ENCODE measurements at regions of chr10 and their contacts with region 1.

Region 1: DNA sequence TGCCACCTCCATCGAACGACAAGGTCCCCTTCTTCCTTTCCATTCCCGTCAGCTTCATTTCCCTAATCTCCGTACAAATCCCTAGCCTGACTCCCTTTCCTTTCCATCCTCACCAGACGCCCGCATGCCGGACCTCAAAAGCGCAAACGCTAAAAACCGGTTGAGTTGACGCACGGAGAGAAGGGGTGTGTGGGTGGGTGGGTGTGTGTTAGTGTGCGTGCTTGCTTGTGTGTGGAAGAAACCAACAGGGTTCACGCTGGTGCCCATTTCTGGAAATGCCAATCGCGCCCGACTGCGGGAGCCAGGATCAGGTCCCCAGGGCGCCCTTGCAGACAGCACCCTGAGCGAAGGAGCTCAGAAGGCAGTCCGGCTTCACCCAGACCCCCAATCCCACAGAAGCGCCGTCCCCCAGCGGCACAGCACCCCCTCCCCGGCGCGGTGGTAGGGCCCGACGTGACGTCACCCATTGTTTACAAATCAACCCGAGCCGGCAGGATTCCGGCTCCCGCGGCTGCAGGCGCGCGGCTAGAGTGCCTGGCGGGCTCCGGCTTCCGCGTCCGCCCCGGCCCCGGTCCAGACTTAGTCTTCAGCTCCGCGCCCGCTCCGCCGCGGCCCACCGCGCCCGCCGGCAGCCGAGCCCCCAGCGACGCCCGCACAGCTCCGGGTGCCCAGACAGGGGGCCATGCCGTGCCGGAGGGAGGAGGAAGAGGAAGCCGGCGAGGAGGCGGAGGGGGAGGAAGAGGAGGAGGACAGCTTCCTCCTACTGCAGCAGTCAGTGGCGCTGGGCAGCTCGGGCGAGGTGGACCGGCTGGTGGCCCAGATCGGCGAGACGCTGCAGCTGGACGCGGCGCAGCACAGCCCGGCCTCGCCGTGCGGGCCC is at the start of gene FRAT1:
- DNase-seq: peak; percentile 91 to 94 (median 92)
- H3K4me3 ChIP-seq: peak within 1 kb of the TSS; percentile 68 to 91 (median 78)
- H3K27ac ChIP-seq: peak within 1 kb of the TSS; percentile 99 to 100
- H3K4me1 ChIP-seq: peaks cover 15 to 36% (median 30%) of the 10 kb centered on the region in 4 experiments
- H3K27me3 ChIP-seq: no peaks in the 10 kb centered on the region

Region 2: GRCh38 chr10:96910488-96911395 is 408.3 kb before region 1 on chr10:
- CTCF ChIA-PET with region 1: no interaction called
- POLR2A ChIA-PET with region 1: no interaction called
- DNase-seq: peak; percentile 64 to 78 (median 69)
- H3K4me3 ChIP-seq: no peak overlapping the region
- H3K27ac ChIP-seq: no peak overlapping the region
- H3K4me1 ChIP-seq: no peaks in the 10 kb centered on the region
- H3K27me3 ChIP-seq: no peaks in the 10 kb centered on the region

Region 3: DNA sequence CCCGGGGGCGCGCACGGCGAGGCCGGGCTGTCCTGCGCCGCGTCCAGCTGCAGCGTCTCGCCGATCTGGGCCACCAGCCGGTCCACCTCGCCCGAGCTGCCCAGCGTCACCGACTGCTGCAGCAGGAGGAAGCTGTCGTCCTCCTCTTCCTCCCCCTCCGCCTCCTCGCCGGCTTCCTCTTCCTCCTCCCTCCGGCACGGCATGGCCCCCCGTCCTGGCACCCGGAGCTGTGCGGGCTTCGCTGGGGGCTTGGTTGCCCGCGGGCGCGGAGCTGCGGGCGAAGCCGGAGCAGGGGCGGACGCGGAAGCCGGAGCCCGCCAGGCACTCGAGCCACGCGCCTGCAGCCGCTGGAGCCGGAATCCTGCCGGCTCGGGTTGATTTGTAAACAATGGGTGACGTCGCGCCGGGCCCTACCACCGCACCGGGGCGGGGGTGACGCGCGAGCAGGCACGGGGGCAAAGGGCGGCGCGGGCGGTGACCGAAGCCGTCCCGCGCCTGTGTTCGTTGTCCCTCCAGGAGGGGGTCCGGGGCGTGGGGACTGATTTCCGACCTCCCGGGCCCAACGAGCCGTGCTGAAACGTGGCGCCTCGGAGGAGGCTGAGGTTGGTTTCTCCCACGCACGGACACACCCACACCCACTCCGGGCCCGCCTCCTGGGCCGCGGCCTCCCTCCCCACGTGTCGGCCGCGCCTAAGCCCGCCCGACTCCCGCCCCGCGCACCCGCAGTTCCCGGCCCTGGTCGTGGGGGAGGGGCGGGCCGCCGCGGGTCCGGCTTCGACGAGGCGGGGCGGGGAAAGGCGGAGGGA is 15.6 kb after region 1 on chr10 and contains the start of gene FRAT2:
- CTCF ChIA-PET with region 1: interaction called, 31 read pairs
- POLR2A ChIA-PET with region 1: interaction called, 23 read pairs
- DNase-seq: peak; percentile 92 to 94 (median 92)
- H3K4me3 ChIP-seq: peak within 1 kb of the TSS; percentile 70 to 88 (median 83)
- H3K27ac ChIP-seq: peak within 1 kb of the TSS; percentile 98 to 99
- H3K4me1 ChIP-seq: peaks cover 8 to 33% (median 25%) of the 10 kb centered on the region in 4 experiments
- H3K27me3 ChIP-seq: no peaks in the 10 kb centered on the region

Measured in common myeloid progenitor, CD34-positive (primary cell).